ENCODE measurements at regions of chr11 and their contacts with region 1.

Region 1: DNA sequence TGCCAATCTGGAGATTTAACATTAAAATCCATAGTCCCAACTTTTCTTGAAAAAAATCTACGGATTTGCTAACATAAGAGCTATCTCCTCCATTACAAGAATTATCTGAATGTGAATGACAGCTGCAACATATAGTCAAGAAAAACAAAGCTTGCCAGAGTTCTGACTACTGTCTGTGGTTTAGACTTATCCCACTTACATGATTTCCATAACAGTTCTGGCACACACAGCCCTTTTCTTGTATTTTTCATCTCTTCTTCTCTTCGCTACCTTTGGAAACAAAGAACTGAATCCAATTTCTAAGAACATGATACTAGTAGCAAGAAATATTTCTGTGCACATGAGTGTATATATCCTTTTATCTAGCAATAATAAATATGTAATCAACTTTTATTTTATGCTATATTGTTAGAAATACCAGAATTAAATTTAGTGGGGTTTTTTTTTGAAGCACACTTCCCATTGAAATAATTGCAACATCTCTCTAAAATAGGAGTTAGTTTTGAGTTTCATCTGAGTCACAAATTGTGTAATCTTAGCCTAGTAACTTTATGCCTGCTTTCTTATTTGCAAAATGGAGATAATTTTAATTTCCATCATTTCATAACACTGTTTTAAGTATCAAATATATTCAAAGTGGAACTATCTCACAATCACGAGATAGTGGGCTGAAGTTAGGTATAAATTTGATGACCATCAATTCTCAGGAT is 1217.6 kb downstream of the JRKL start:
- DNase-seq: no peak
- ATAC-seq: peak in 1 of 4 donors; percentile 31
- H3K4me3 ChIP-seq: no peak overlapping the region
- H3K27ac ChIP-seq: no peak overlapping the region
- H3K4me1 ChIP-seq: no peaks in the 10 kb centered on the region
- H3K27me3 ChIP-seq: no peaks in the 10 kb centered on the region
- CTCF ChIP-seq: no peak
- POLR2A ChIP-seq: no peak

Region 2: GRCh38 chr11:97557399-97557798 is 50.0 kb before region 1 on chr11:
- intact Hi-C with region 1: no loop called
- DNase-seq: no peak
- ATAC-seq: no peak
- H3K4me3 ChIP-seq: no peak overlapping the region
- H3K27ac ChIP-seq: no peak overlapping the region
- H3K4me1 ChIP-seq: no peaks in the 10 kb centered on the region
- H3K27me3 ChIP-seq: no peaks in the 10 kb centered on the region
- CTCF ChIP-seq: peak in 4 of 12 donors; percentile 7 to 30 (median 24)
- POLR2A ChIP-seq: no peak

Region 3: DNA sequence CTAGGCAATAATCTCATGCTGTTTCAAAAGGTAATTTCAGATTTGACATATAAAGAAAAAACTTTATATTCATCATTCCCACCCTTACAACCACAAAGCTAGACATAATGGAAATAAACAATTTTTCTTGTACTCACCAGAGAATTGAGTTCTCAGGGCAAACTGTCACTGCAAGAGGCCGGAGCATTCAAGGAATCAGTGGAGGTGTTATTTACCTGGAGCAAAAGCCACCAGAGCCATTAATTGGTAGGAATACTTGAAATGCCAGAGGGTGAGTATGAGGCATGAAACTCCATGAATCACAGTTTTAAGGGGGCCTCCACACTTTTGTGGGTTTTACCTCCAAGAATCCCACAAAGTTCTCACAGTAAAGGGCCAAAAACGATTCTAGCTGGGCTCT is 27.0 kb before region 1 on chr11:
- intact Hi-C with region 1: loop called in 1 of 10 experiments (anchors 2 kb)
- DNase-seq: no peak
- ATAC-seq: no peak
- H3K4me3 ChIP-seq: no peak overlapping the region
- H3K27ac ChIP-seq: no peak overlapping the region
- H3K4me1 ChIP-seq: no peaks in the 10 kb centered on the region
- H3K27me3 ChIP-seq: no peaks in the 10 kb centered on the region
- CTCF ChIP-seq: no peak
- POLR2A ChIP-seq: no peak

Region 4: DNA sequence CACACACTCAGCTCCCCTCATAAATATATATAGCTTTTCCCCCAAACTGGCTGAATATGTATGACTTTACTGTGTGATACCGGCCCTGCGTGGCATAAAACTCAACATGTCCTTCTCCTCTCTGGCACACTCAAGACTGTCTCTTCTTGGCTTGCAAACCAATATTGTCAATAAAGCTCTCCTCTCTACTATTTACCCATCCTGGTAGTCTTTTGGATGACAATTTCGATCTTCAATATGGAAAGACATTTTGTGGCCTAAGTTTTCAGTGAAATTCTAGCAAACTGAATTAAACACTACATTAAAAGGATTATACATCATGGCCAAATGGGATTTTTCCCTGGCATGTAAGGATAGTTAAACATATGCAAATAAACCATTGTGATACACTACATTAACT is 38.3 kb after region 1 on chr11:
- intact Hi-C with region 1: no loop called
- DNase-seq: no peak
- ATAC-seq: no peak
- H3K4me3 ChIP-seq: no peak overlapping the region
- H3K27ac ChIP-seq: no peak overlapping the region
- H3K4me1 ChIP-seq: no peaks in the 10 kb centered on the region
- H3K27me3 ChIP-seq: no peaks in the 10 kb centered on the region
- CTCF ChIP-seq: no peak
- POLR2A ChIP-seq: no peak